Cardiac septum (tissue), 1 donor: ENCODE measurements at regions of chr5 and their contacts with region 1.

Region 1: GRCh38 chr5:138575194-138576015 is at the start of gene HSPA9:
- DNase-seq: peak; percentile 98
- total RNA-seq, gene HSPA9: 274 TPM

Region 2: DNA sequence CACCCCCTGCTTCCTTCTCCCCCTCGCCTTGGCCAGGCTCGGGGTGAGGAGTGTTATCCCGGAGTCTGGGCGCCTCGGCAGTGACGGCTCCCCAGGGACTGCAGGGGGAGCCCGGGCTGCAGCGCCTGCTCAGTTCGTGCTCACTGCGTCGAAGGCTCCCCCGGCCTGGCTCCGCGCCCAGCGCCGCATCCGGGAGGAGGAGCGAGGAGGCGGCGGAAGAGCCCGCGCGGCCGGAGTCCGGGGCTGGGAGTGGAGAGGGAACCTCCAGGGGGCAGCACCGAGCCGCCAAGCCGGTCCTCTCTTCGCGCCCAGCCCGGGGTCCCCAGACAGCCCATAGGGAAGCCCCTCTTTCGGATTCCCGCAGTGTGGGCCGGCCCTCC is 111.4 kb before region 1 on chr5:
- intact Hi-C with region 1: loop called (anchors 1 kb)
- DNase-seq: peak; percentile 98

Region 3: DNA sequence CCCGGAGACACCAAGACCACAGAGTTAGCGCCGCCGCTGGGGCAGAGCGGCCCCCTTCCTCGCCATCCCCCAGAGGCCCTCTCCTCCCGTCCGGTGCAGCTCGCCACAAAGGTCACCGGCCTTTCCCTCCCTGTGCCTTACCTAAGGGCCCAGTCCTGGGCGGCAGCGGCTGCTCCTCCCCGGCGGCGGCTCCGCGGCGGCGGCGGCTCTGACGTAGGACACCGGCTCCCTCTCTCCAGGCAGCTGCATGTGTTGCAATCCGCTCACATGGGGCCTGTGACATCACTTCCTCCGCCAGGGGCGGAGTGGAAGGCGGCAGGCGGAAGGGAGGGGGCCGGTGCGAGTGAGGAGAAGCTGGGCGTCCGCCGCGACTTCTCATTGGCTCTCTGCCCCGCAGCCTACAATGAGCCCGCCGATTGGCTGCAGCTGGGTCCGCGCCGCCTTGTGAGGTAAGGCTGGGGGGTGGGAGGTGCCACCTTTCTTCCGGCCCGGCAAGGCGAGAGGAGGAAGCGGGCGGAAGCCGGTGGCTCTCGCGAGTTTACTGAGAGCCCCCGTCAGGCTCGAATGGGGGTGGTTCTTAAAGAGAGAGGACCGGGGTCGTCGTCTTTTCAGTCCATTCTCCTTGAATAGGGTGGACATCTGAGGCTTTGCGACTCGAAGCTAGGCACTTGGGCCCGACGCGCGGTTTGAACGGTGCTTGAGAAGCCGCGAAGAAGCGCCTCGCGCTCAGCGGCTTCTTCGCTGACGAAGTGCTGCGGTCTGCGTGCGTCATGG is 32.3 kb before region 1 on chr5 and contains the start of gene ETF1:
- intact Hi-C with region 1: loop called (anchors 1 kb)
- DNase-seq: peak; percentile 100
- total RNA-seq, gene ETF1: 86.8 TPM

Region 4: DNA sequence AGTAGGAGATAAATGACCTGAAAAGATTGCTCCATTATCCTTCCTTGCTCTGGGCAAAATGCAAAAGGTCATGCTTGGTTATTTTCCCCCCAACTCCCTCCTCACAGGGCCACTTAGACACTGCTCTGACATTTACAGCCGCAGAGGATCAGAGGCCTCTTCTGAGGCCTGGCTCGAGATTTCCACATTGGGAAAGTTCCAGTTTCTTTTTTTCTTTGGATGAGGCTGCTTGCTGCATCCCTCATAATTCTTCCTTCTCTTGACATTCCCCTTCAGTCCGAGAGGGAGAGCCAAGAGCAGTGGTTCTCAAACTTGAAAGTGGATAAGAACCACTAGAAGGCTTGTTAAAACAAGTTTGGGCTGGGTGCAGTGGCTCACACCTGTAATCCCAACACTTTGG is 59.9 kb after region 1 on chr5:
- intact Hi-C with region 1: loop called (anchors 5 kb)
- DNase-seq: no peak

Region 5: GRCh38 chr5:138676556-138677193 is 101.3 kb after region 1 on chr5:
- intact Hi-C with region 1: no loop called
- DNase-seq: no peak

Region 6: DNA sequence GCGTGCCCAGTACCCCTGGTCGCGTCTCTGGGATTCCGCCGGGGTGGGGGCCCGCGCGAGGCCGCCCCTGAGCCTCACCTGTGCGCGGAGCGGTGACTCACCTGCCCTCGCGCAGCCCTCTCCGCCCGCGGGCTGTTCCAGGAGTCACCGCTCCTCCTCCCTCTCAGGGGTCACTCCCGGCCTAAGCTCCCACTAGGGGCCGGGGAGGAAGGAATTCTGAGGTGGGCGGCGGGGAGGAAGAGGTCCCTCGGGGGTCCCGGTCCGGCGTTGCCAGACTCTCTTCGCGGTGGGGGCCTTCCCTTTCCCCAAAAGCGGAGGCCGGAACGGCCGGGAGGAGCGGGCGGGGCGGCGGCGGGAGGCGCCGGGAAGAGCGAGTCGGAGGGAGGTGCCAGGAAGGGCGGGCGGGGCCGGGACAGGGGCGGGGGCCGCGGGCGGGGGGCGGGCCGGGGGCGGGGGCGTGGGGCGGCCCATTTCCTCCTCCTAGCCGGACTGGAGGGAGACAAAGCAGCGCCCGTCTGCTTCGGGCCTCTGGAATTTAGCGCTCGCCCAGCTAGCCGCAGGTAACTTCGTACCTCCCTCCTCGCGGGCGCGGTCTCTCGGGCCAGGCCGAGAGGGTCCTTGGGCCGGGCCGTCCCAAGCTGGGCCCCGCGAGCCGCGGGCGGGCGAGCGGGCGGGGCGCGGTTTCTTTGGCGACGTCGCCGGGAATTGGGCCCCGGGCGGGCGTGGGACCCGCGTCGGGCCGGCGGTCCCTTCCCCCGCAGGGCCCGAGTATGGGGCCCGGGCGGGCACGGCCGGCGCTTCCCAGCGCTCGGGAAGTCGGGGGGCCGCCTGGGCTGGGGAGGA is 177.8 kb after region 1 on chr5 and contains the start of gene CTNNA1:
- intact Hi-C with region 1: loop called (anchors 5 kb)
- DNase-seq: peak; percentile 93
- total RNA-seq, gene CTNNA1: 427 TPM

Region 7: GRCh38 chr5:138936225-138936967 is 361.0 kb after region 1 on chr5:
- intact Hi-C with region 1: no loop called
- DNase-seq: no peak